ENCODE measurements at regions of chr20 and their contacts with region 1.

Region 1: DNA sequence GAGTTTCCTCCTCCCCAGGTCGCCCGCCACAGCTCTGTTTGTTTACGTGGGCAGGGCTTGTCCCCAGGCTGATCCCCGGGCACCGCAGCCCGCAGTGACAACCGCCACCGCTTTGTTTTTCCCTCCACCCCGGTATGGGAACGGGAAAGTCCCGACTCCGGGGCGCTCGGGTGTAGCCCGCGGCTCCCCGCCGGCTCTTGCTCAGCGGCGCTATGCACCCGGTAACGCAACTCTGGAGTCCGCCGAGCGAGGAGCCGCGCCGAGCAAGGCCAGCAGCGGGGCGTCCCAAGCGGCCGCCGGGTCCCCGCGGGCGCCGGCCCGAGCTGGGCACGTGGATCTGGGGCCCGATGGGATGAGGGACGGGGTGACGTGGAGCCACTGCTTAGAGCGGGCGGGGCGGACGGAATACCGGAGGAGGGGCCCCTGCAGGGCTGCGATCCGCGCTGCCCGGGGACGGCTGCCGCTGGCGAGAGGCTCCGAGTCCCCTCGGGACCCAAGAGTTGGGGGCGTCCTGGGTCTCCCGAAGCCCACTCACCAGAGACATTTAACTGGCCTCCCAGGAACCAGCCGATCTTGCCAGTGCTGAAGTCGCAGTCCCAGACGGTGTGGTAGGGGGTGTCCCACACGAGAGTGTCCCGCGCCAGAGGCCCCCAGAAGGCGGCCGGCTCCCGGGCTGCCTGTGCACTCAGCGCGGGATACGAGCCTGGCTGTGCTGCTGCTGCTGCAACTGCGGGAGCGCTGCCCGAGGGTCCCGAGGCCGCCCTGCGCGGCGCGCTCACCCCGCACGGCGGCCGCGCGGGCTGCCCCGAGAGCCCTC is 497 bp downstream of the ACSS1 start:
- DNase-seq: peak; percentile 67 to 86 (median 74)
- ATAC-seq: peak; percentile 77
- H3K4me3 ChIP-seq: peak overlapping the region; percentile 86
- H3K4me3 Mint-ChIP-seq: peak overlapping the region; percentile 81 to 90 (median 88)
- H3K27ac ChIP-seq: peak overlapping the region; percentile 87
- H3K27ac Mint-ChIP-seq: peak overlapping the region; percentile 72 to 94 (median 88)
- H3K4me1 ChIP-seq: peaks cover 33 to 48% of the 10 kb centered on the region in 2 donors
- H3K4me1 Mint-ChIP-seq: peaks cover 38 to 63% (median 47%) of the 10 kb centered on the region in 7 donors
- H3K27me3 ChIP-seq: no peaks in the 10 kb centered on the region
- H3K27me3 Mint-ChIP-seq: peaks cover 0 to 29% (median 0%) of the 10 kb centered on the region in 5 donors

Region 2: DNA sequence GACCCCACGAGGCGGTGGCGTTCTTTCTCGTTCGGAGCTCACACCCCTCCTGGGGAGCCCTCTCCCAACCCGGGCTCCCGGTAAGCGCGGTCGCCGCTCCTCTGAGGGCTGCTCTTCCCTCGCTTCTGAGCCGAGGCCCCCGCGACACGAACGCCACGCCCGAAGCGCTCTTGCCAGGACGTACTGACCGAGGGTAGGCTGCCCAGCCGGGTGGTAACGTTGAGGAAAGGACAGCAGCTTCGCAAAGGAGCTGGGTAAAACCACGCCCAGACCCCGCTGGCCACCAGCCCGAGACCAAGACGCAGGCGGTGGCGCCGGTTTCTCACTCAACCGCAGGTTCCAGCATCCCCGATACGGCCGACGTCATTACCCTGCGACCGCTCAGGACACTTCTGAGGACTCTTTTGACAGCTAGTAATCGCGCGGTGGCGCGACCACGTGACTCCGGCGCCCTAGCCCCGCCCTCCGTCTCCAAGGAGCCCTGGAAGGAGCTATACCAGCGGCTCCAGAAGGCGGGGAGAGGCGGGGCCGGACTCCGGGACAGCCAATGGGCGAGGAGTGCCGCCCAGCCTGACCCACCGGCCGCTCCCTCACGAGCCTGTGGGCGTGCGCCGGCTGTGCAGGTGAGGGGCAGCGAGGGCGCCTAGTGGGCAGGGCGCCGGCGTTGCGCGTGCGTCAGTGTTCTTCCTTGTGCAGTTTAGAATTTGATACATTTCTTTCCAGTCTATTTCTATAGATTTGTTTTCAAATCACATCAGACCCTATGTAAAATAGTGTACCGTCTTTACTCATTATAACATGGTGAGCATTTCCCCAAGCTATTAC is 1699.5 kb before region 1 on chr20:
- CTCF ChIA-PET with region 1: no interaction called
- POLR2A ChIA-PET with region 1: interaction called, 3 read pairs
- intact Hi-C with region 1: loop called in 1 of 2 experiments (anchors 2 kb)
- DNase-seq: peak; percentile 97 to 99 (median 98)
- ATAC-seq: peak; percentile 81
- H3K4me3 ChIP-seq: peak overlapping the region; percentile 85
- H3K4me3 Mint-ChIP-seq: peak overlapping the region; percentile 91 to 95 (median 93)
- H3K27ac ChIP-seq: peak overlapping the region; percentile 92
- H3K27ac Mint-ChIP-seq: peak overlapping the region; percentile 94 to 98 (median 97)
- H3K4me1 ChIP-seq: peaks cover 14 to 22% of the 10 kb centered on the region in 2 donors
- H3K4me1 Mint-ChIP-seq: peaks cover 17 to 38% (median 34%) of the 10 kb centered on the region in 7 donors
- H3K27me3 ChIP-seq: no peaks in the 10 kb centered on the region
- H3K27me3 Mint-ChIP-seq: peaks cover 0 to 4% (median 0%) of the 10 kb centered on the region in 5 donors

Region 3: GRCh38 chr20:24027229-24027628 is 1030.2 kb before region 1 on chr20:
- CTCF ChIA-PET with region 1: no interaction called
- POLR2A ChIA-PET with region 1: interaction called, 4 read pairs
- intact Hi-C with region 1: loop called (anchors 10 kb)
- DNase-seq: peak; percentile 45 to 93 (median 87)
- ATAC-seq: peak; percentile 99
- H3K4me3 ChIP-seq: peak overlapping the region; percentile 39
- H3K4me3 Mint-ChIP-seq: peak overlapping the region; percentile 26 to 81 (median 71)
- H3K27ac ChIP-seq: peak overlapping the region; percentile 83
- H3K27ac Mint-ChIP-seq: peak overlapping the region; percentile 95 to 99 (median 97)
- H3K4me1 ChIP-seq: peaks cover 17 to 29% of the 10 kb centered on the region in 2 donors
- H3K4me1 Mint-ChIP-seq: peaks cover 20 to 76% (median 62%) of the 10 kb centered on the region in 7 donors
- H3K27me3 ChIP-seq: no peaks in the 10 kb centered on the region
- H3K27me3 Mint-ChIP-seq: no peaks in the 10 kb centered on the region

Region 4: DNA sequence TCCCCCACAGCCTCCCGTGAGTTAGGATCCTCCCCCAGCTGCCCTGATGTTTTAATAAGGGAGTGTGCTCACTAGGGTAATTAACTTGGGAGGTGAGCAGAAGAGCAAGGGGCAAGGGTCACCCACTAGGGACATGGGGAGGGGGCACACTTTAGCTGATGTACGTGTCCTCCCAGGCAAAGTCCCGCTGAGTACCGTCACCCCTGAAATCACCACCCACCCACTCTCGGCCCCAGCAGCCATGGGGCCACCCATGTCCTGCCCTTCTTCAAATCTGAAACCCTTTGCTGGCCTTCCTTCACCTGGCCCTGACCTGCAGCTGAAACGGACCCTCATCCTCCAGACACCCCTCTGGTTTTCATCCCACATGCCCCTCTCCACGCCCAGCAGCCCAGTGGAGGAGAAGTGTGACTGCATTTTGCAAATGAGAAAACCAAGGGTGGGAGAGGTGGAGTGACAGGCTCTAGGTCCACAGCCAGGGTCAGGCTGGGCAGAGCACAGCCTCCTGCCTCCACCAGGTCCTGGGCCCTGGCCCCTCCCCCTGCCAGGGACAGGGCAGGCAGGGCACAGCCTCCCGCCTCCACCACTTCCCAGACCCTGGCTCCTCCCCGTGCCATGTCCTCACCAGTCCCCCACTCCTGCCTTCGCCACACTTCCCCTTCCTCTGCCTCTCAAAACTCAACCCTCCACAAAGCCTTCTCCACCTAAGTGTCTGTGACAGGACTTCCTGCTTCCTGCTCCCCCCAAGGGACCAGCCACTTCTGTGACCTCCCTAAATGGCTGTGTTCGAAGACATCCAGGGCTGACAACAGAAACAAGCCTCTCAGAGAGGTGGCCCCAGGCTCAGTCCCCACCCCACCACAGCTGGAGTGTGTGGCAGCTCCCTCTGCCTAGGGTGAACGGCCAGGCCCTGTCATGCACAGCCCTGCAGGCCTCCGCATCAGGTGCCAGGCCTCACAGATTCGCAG is 14.6 kb before region 1 on chr20:
- CTCF ChIA-PET with region 1: no interaction called
- POLR2A ChIA-PET with region 1: interaction called, 50 read pairs
- intact Hi-C with region 1: loop called (anchors 1 kb)
- DNase-seq: peak in 8 of 9 donors; percentile 19 to 74 (median 64)
- ATAC-seq: peak; percentile 83
- H3K4me3 ChIP-seq: no peak overlapping the region
- H3K4me3 Mint-ChIP-seq: peak overlapping the region; percentile 37 to 86 (median 74)
- H3K27ac ChIP-seq: peak overlapping the region; percentile 76
- H3K27ac Mint-ChIP-seq: peak overlapping the region; percentile 84 to 99 (median 95)
- H3K4me1 ChIP-seq: peaks cover 25 to 46% of the 10 kb centered on the region in 2 donors
- H3K4me1 Mint-ChIP-seq: peaks cover 17 to 59% (median 35%) of the 10 kb centered on the region in 7 donors
- H3K27me3 ChIP-seq: no peaks in the 10 kb centered on the region
- H3K27me3 Mint-ChIP-seq: no peaks in the 10 kb centered on the region

Region 5: GRCh38 chr20:25081065-25081729 is 23.8 kb after region 1 on chr20:
- CTCF ChIA-PET with region 1: no interaction called
- POLR2A ChIA-PET with region 1: no interaction called
- intact Hi-C with region 1: no loop called
- DNase-seq: peak in 6 of 9 donors; percentile 20 to 63 (median 49)
- ATAC-seq: peak; percentile 64
- H3K4me3 ChIP-seq: no peak overlapping the region
- H3K4me3 Mint-ChIP-seq: peak overlapping the region in 4 of 10 donors; percentile 19 to 35 (median 24)
- H3K27ac ChIP-seq: no peak overlapping the region
- H3K27ac Mint-ChIP-seq: no peak overlapping the region
- H3K4me1 ChIP-seq: peaks cover 14 to 21% of the 10 kb centered on the region in 2 donors
- H3K4me1 Mint-ChIP-seq: peaks cover 11 to 37% (median 27%) of the 10 kb centered on the region in 7 donors
- H3K27me3 ChIP-seq: peaks cover 23 to 25% of the 10 kb centered on the region in 2 donors
- H3K27me3 Mint-ChIP-seq: peaks cover 67 to 88% (median 74%) of the 10 kb centered on the region in 5 donors

Region 6: GRCh38 chr20:25247956-25248785 is 190.7 kb after region 1 on chr20 and contains the start of gene PYGB:
- CTCF ChIA-PET with region 1: no interaction called
- POLR2A ChIA-PET with region 1: interaction called, 4 read pairs
- intact Hi-C with region 1: loop called (anchors 1 to 5 kb)
- DNase-seq: peak; percentile 52 to 84 (median 68)
- ATAC-seq: peak; percentile 95
- H3K4me3 ChIP-seq: peak within 1 kb of the TSS; percentile 93
- H3K4me3 Mint-ChIP-seq: peak within 1 kb of the TSS; percentile 85 to 99 (median 94)
- H3K27ac ChIP-seq: peak within 1 kb of the TSS; percentile 75
- H3K27ac Mint-ChIP-seq: peak within 1 kb of the TSS; percentile 79 to 97 (median 87)
- H3K4me1 ChIP-seq: peaks cover 5 to 7% of the 10 kb centered on the region in 2 donors
- H3K4me1 Mint-ChIP-seq: peaks cover 19 to 60% (median 49%) of the 10 kb centered on the region in 7 donors
- H3K27me3 ChIP-seq: no peaks in the 10 kb centered on the region
- H3K27me3 Mint-ChIP-seq: peaks cover 0 to 13% (median 0%) of the 10 kb centered on the region in 5 donors
- total RNA-seq, gene PYGB: 29.8 to 45.2 (median 43.6) TPM

Region 7: GRCh38 chr20:25273046-25273445 is 215.6 kb after region 1 on chr20:
- CTCF ChIA-PET with region 1: no interaction called
- POLR2A ChIA-PET with region 1: no interaction called
- intact Hi-C with region 1: no loop called
- DNase-seq: no peak
- ATAC-seq: no peak
- H3K4me3 ChIP-seq: no peak overlapping the region
- H3K4me3 Mint-ChIP-seq: no peak overlapping the region
- H3K27ac ChIP-seq: no peak overlapping the region
- H3K27ac Mint-ChIP-seq: no peak overlapping the region
- H3K4me1 ChIP-seq: no peaks in the 10 kb centered on the region
- H3K4me1 Mint-ChIP-seq: peaks cover 0 to 2% (median 0%) of the 10 kb centered on the region in 7 donors
- H3K27me3 ChIP-seq: no peaks in the 10 kb centered on the region
- H3K27me3 Mint-ChIP-seq: no peaks in the 10 kb centered on the region

Region 8: GRCh38 chr20:25407311-25408169 is 350.1 kb after region 1 on chr20 and contains the start of gene GINS1:
- CTCF ChIA-PET with region 1: no interaction called
- POLR2A ChIA-PET with region 1: no interaction called
- intact Hi-C with region 1: loop called in 1 of 2 experiments (anchors 5 kb)
- DNase-seq: peak; percentile 56 to 92 (median 69)
- ATAC-seq: peak; percentile 94
- H3K4me3 ChIP-seq: peak within 1 kb of the TSS; percentile 75
- H3K4me3 Mint-ChIP-seq: peak within 1 kb of the TSS; percentile 77 to 95 (median 92)
- H3K27ac ChIP-seq: peak within 1 kb of the TSS; percentile 57
- H3K27ac Mint-ChIP-seq: peak within 1 kb of the TSS; percentile 28 to 93 (median 80)
- H3K4me1 ChIP-seq: peaks cover 6 to 11% of the 10 kb centered on the region in 2 donors
- H3K4me1 Mint-ChIP-seq: peaks cover 4 to 25% (median 13%) of the 10 kb centered on the region in 7 donors
- H3K27me3 ChIP-seq: no peaks in the 10 kb centered on the region
- H3K27me3 Mint-ChIP-seq: no peaks in the 10 kb centered on the region
- total RNA-seq, gene GINS1: 0.44 to 24.9 (median 0.81) TPM